Mammary epithelial cell (primary cell): ENCODE measurements at regions of chr1 and their contacts with region 1.

Region 1: DNA sequence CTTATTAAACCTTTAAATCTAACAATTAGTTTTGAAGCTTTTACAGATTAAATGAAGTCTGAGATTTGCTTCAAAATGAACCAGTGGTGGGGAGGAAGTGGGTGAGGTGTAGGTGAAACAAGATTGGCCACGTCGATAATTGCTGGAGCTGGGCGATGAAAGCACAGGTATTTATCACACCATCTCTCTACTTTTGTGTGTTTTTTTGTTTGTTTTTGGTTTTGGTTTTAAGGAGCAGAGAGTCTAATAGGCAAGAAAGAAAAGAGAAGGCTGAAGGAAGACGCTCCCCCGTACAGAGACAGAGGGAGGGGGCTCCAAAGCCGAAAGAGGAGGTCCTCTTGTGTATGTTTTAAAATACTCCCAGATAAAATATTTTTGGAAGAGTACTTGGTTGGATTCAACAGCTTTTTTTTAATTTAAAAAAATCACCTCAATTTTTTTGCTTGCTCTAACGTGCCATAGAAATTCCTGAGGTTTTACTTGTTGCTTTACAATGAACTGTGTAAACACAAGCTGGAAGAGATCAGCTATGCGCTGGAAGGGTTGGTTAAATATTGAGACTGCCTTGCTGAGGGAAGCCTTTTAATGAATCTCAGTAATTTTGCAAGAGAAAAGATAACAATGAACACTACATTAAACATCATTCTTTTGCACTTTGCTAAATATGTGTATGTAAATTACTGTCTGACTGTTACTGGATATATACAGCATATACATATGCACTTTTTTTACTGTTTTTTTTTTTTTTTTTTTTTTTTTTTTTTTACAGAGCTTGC is 6.7 kb upstream of the LGALS8 start:
- DNase-seq: peak; percentile 76
- H3K4me3 ChIP-seq: peak overlapping the region; percentile 2 to 33 (median 17)
- H3K27ac ChIP-seq: peak overlapping the region; percentile 61
- H3K4me1 ChIP-seq: peaks cover 18% of the 10 kb centered on the region
- H3K27me3 ChIP-seq: no peaks in the 10 kb centered on the region
- CTCF ChIP-seq: no peak

Region 2: DNA sequence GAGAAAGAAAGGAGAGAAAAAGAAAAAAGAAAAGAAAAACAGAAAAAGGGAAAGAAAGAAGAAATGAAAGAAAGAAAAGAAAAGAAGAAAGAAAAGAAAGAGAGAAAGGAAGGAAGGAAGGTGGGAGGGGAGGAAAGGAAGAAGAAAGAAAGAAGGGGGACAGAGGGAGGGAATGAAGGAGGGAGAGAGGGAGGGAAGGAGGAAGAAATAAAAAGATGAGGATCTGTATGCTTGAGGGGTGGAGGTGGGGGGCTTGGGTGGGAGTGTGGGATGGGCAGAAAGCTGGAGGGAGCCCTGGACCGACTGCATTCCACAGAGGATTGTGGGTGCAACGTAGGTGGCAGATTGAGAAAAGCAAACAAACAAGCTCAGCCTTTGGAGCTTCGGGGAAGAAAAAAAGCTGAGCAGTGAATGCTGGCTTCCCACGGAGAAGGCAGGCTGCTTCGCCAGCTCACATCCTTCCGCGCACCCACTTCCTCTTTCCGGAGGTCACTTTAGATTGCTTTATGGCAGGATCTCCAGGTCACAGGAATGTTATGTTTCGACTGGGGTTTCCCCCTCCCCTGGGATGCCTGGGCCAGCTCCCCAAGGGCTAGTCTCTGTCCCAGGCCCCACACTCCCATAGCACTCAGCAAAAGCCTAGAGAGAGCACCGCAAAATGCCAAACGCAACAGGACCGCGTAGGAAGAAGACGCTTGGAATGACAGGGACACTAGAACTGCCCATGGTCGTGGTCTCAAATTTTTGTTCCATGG is 14.1 kb before region 1 on chr1:
- CTCF ChIA-PET with region 1: no interaction called
- dilution Hi-C with region 1: no loop called
- in situ Hi-C with region 1: no loop called
- intact Hi-C with region 1: loop called (anchors 2 kb)
- DNase-seq: peak; percentile 52
- H3K4me3 ChIP-seq: no peak overlapping the region
- H3K27ac ChIP-seq: no peak overlapping the region
- H3K4me1 ChIP-seq: peaks cover 10% of the 10 kb centered on the region
- H3K27me3 ChIP-seq: no peaks in the 10 kb centered on the region
- CTCF ChIP-seq: no peak

Region 3: DNA sequence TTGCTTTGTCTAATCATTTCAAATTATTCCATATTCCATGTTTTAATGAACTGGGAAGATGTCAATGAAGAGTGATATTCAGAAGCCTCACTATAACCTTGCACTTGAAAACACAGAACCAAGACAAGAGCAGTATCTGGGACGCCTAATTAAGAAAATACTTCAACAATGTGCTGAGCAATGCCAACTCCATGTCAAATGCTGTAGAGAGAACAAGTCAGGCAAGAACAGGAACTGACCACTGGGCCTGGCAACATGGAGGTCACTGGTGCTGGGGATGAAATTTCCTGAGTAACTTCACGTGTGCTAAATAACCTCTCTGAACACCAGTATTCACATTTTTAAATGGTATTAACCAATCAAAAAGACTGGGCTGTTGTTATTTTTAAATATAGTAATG is 64.4 kb after region 1 on chr1:
- CTCF ChIA-PET with region 1: no interaction called
- dilution Hi-C with region 1: no loop called
- in situ Hi-C with region 1: no loop called
- intact Hi-C with region 1: no loop called
- DNase-seq: no peak
- H3K4me3 ChIP-seq: no peak overlapping the region
- H3K27ac ChIP-seq: no peak overlapping the region
- H3K4me1 ChIP-seq: no peaks in the 10 kb centered on the region
- H3K27me3 ChIP-seq: no peaks in the 10 kb centered on the region
- CTCF ChIP-seq: no peak